Activated CD4-positive, alpha-beta T cell treated with anti-CD3 and anti-CD28 coated beads, Interleukin-2, amount 10 ng/mL, durations not matched to agents 7 days and 5 days (primary cell): ENCODE measurements at regions of chr10 and their contacts with region 1.

Region 1: DNA sequence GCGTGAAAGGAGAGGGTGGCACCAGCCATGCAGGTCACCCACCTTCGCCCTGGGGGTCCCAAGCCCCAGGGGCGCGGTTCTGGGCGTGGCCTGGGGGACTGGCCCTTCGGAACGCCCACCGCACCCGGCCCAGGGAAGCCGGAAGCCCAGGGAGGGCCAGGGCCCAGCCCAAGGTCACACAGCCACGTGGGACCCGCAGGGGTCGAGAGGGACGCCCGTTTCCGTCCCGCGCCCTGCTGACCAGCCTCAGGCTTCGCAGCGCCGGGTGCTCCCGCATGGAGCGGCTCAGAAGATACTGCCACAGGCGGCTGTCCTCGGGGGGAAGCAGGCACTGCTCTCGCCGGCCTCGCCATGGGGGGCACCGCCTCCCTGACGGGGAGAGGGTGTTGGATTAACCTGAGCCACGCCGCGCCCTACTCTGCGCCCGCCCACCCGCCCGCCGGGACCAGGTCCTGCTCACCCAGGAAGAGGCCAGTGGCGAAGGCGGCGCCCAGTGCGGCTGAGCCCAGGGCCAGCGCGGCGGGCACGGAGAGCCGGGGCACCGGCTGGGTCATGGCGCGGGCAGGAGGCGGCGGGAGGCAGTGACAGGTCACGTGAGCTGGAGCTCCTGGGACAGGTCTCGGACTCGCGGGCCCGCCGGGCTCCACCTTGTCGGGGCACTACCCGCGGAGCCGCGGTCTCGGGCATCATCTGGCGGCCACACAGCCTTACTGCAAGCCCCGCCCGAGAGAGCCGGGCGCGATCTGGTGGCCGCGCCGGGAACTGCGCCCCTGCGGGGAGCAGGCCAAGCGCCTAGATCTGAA is at the start of gene COMTD1:
- DNase-seq: peak; percentile 95
- H3K4me3 Mint-ChIP-seq: peak within 1 kb of the TSS; percentile 78
- H3K27ac Mint-ChIP-seq: peak within 1 kb of the TSS; percentile 90
- H3K4me1 Mint-ChIP-seq: peaks cover 33% of the 10 kb centered on the region
- H3K27me3 Mint-ChIP-seq: no peaks in the 10 kb centered on the region
- total RNA-seq, gene COMTD1: 27.3 to 44.7 TPM

Region 2: DNA sequence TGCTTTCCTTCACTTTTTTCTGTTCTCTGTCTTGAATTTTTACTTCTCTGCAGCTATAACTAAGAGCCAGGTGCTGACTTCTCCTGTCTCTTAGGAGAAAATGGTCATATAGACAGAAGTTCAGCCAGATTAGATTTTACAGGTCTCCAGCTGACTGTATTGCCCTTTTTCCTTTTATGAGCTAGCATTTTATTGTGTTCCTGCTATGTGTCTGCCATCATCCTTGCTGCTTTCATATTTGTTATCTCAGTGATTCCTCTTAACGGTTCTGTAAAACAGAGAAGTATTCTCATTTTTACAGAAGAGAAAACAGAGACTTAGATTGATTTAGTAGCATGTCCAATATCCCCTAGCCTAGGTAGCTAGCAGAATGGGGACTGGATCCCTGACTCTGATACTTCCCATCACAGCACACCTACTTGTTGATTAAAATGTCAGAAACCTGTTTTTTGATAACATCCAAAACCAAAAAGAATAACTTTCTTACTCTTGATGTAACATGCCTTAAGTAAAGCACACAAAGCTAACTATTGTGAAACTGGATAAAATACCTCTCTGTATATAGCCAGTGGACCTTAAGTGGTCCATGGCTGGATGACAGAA is 404.0 kb before region 1 on chr10:
- CTCF ChIA-PET with region 1: no interaction called
- POLR2A ChIA-PET with region 1: no interaction called
- DNase-seq: no peak
- H3K4me3 Mint-ChIP-seq: no peak overlapping the region
- H3K27ac Mint-ChIP-seq: no peak overlapping the region
- H3K4me1 Mint-ChIP-seq: peaks cover 51% of the 10 kb centered on the region
- H3K27me3 Mint-ChIP-seq: no peaks in the 10 kb centered on the region

Region 3: GRCh38 chr10:75111367-75111906 is 124.1 kb before region 1 on chr10 and contains the start of gene SAMD8:
- CTCF ChIA-PET with region 1: interaction called, 25 read pairs
- POLR2A ChIA-PET with region 1: no interaction called
- DNase-seq: peak; percentile 96
- H3K4me3 Mint-ChIP-seq: peak within 1 kb of the TSS; percentile 80
- H3K27ac Mint-ChIP-seq: peak within 1 kb of the TSS; percentile 99
- H3K4me1 Mint-ChIP-seq: peaks cover 57% of the 10 kb centered on the region
- H3K27me3 Mint-ChIP-seq: no peaks in the 10 kb centered on the region
- total RNA-seq, gene SAMD8: 12.9 to 13.3 TPM

Region 4: GRCh38 chr10:75187961-75188426 is 47.6 kb before region 1 on chr10:
- CTCF ChIA-PET with region 1: interaction called, 32 read pairs
- POLR2A ChIA-PET with region 1: interaction called, 4 read pairs
- DNase-seq: peak; percentile 83
- H3K4me3 Mint-ChIP-seq: no peak overlapping the region
- H3K27ac Mint-ChIP-seq: peak overlapping the region; percentile 89
- H3K4me1 Mint-ChIP-seq: peaks cover 17% of the 10 kb centered on the region
- H3K27me3 Mint-ChIP-seq: no peaks in the 10 kb centered on the region

Region 5: GRCh38 chr10:75201793-75202307 is 33.7 kb before region 1 on chr10:
- CTCF ChIA-PET with region 1: interaction called, 18 read pairs
- POLR2A ChIA-PET with region 1: no interaction called
- DNase-seq: no peak
- H3K4me3 Mint-ChIP-seq: no peak overlapping the region
- H3K27ac Mint-ChIP-seq: no peak overlapping the region
- H3K4me1 Mint-ChIP-seq: peaks cover 4% of the 10 kb centered on the region
- H3K27me3 Mint-ChIP-seq: no peaks in the 10 kb centered on the region

Region 6: DNA sequence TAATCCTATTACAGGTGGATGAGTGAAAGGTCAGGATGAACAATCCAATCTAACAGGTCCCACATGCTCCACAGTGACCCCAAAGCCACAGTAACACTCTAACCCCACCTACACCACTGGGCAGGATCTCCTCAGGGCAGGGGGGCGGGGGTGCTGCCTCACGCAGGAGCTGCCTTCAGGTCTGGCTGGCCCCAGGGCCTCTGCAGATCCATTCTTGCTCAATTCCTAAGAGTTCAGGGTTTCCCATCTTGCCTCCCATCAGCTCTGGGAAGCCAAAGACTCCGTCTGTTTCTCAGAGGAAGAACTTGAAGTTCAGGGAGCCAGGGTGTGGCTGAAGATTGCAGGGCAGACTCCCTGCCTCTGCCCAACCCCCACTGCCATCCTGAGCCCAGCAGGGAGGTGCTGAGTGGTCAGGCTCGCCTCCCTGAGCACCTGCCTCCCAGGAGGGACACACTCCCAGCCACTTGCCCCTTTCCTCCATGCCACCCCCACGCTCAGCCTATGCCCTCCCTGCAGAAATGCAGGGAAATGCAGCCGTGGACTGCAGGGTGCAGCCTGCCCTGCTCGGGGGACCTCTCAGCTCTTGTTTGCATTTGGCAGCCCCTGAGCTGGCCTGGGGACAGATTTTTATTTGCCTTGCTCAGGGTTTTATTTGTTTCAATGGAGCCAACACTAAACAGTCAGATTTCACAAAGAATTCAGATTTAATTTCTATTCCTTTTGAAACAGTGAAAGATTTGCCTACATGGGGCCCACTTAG is 10.1 kb after region 1 on chr10:
- CTCF ChIA-PET with region 1: interaction called, 28 read pairs
- POLR2A ChIA-PET with region 1: no interaction called
- DNase-seq: no peak
- H3K4me3 Mint-ChIP-seq: no peak overlapping the region
- H3K27ac Mint-ChIP-seq: no peak overlapping the region
- H3K4me1 Mint-ChIP-seq: no peaks in the 10 kb centered on the region
- H3K27me3 Mint-ChIP-seq: no peaks in the 10 kb centered on the region

Region 7: GRCh38 chr10:75269605-75270004 is 34.0 kb after region 1 on chr10:
- CTCF ChIA-PET with region 1: no interaction called
- POLR2A ChIA-PET with region 1: no interaction called
- DNase-seq: no peak
- H3K4me3 Mint-ChIP-seq: no peak overlapping the region
- H3K27ac Mint-ChIP-seq: no peak overlapping the region
- H3K4me1 Mint-ChIP-seq: no peaks in the 10 kb centered on the region
- H3K27me3 Mint-ChIP-seq: no peaks in the 10 kb centered on the region

Region 8: GRCh38 chr10:75444781-75445386 is 209.3 kb after region 1 on chr10:
- CTCF ChIA-PET with region 1: no interaction called
- POLR2A ChIA-PET with region 1: no interaction called
- DNase-seq: no peak
- H3K4me3 Mint-ChIP-seq: no peak overlapping the region
- H3K27ac Mint-ChIP-seq: no peak overlapping the region
- H3K4me1 Mint-ChIP-seq: no peaks in the 10 kb centered on the region
- H3K27me3 Mint-ChIP-seq: peaks cover 18% of the 10 kb centered on the region